ENCODE measurements at regions of chrX and their contacts with region 1.

Region 1: GRCh38 chrX:136268051-136269048 is 17.1 kb upstream of the MAP7D3 start:
- DNase-seq: peak; percentile 9 to 69 (median 30)
- ATAC-seq: peak; percentile 60
- H3K4me3 ChIP-seq: no peak overlapping the region
- H3K4me3 Mint-ChIP-seq: no peak overlapping the region
- H3K27ac ChIP-seq: no peak overlapping the region
- H3K27ac Mint-ChIP-seq: no peak overlapping the region
- H3K4me1 ChIP-seq: no peaks in the 10 kb centered on the region
- H3K4me1 Mint-ChIP-seq: no peaks in the 10 kb centered on the region
- H3K27me3 ChIP-seq: no peaks in the 10 kb centered on the region
- H3K27me3 Mint-ChIP-seq: no peaks in the 10 kb centered on the region
- CTCF ChIP-seq: peak; percentile 64

Region 2: DNA sequence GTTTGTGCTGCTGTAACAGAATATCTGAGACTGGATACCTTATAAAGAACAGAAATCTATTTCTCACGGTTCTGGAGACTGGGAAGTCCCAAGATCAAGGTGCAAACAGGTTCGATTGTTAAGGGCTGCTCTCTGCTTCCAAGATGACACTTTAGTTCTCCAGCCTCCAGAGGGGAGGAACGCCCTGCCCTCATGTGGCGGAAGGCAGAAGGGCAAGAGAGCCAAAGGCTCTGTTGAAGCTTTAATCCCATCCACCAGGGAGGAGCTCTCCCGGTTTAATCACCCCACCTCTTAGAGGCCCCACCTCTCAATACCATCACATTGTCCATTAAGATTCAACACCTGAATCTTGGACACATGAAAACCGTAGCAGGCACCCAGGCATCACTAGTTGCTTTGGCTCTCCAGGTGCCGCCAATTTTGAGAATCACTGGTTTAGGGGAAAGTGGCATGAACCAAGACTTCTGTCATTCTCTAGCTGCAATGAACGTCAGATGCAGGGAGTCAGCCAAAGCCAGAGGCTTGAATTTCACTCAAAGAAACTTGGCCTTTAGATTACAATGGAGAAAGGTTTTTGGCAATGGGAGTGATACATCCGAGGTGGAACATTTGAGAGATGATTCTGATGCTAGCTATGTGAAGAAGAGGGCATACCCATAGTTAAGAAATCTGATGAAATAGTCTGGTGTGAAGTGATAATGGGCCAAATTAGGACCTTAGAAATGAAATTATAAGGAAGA is 105.3 kb before region 1 on chrX:
- CTCF ChIA-PET with region 1: interaction called, 3 read pairs
- POLR2A ChIA-PET with region 1: no interaction called
- intact Hi-C with region 1: loop called in 1 of 2 experiments (anchors 5 kb)
- DNase-seq: peak; percentile 9 to 63 (median 34)
- ATAC-seq: peak; percentile 77
- H3K4me3 ChIP-seq: no peak overlapping the region
- H3K4me3 Mint-ChIP-seq: no peak overlapping the region
- H3K27ac ChIP-seq: no peak overlapping the region
- H3K27ac Mint-ChIP-seq: no peak overlapping the region
- H3K4me1 ChIP-seq: no peaks in the 10 kb centered on the region
- H3K4me1 Mint-ChIP-seq: peaks cover 16% of the 10 kb centered on the region
- H3K27me3 ChIP-seq: no peaks in the 10 kb centered on the region
- H3K27me3 Mint-ChIP-seq: no peaks in the 10 kb centered on the region
- CTCF ChIP-seq: peak; percentile 55

Region 3: GRCh38 chrX:136209016-136209738 is 59.2 kb before region 1 on chrX:
- CTCF ChIA-PET with region 1: no interaction called
- POLR2A ChIA-PET with region 1: no interaction called
- intact Hi-C with region 1: loop called in 1 of 2 experiments (anchors 10 kb)
- DNase-seq: peak in 13 of 14 experiments; percentile 6 to 73 (median 31)
- ATAC-seq: peak; percentile 62
- H3K4me3 ChIP-seq: no peak overlapping the region
- H3K4me3 Mint-ChIP-seq: no peak overlapping the region
- H3K27ac ChIP-seq: no peak overlapping the region
- H3K27ac Mint-ChIP-seq: no peak overlapping the region
- H3K4me1 ChIP-seq: peaks cover 32% of the 10 kb centered on the region
- H3K4me1 Mint-ChIP-seq: peaks cover 19% of the 10 kb centered on the region
- H3K27me3 ChIP-seq: no peaks in the 10 kb centered on the region
- H3K27me3 Mint-ChIP-seq: no peaks in the 10 kb centered on the region
- CTCF ChIP-seq: no peak